PC-3 (cell line): ENCODE measurements at regions of chr20 and their contacts with region 1.

Region 1: GRCh38 chr20:33262658-33263065 is 20.4 kb upstream of the BPIFB1 start:
- DNase-seq: peak; percentile 74
- ATAC-seq: peak; percentile 97
- H3K4me3 ChIP-seq: no peak overlapping the region
- H3K27ac ChIP-seq: no peak overlapping the region
- H3K4me1 ChIP-seq: peaks cover 6% of the 10 kb centered on the region; the same call in 1 of the 2 replicates
- H3K27me3 ChIP-seq: peaks cover 47% of the 10 kb centered on the region
- CTCF ChIP-seq: peak; percentile 88

Region 2: GRCh38 chr20:33299111-33299603 is 36.5 kb after region 1 on chr20:
- CTCF ChIA-PET with region 1: interaction called, 3 read pairs
- POLR2A ChIA-PET with region 1: no interaction called
- intact Hi-C with region 1: loop called (anchors 1 kb)
- DNase-seq: peak; percentile 81
- ATAC-seq: peak; percentile 93
- H3K4me3 ChIP-seq: peak overlapping the region; percentile 43; the same call in 1 of the 2 replicates
- H3K27ac ChIP-seq: no peak overlapping the region
- H3K4me1 ChIP-seq: no peaks in the 10 kb centered on the region
- H3K27me3 ChIP-seq: peaks cover 18% of the 10 kb centered on the region
- CTCF ChIP-seq: peak; percentile 93

Region 3: DNA sequence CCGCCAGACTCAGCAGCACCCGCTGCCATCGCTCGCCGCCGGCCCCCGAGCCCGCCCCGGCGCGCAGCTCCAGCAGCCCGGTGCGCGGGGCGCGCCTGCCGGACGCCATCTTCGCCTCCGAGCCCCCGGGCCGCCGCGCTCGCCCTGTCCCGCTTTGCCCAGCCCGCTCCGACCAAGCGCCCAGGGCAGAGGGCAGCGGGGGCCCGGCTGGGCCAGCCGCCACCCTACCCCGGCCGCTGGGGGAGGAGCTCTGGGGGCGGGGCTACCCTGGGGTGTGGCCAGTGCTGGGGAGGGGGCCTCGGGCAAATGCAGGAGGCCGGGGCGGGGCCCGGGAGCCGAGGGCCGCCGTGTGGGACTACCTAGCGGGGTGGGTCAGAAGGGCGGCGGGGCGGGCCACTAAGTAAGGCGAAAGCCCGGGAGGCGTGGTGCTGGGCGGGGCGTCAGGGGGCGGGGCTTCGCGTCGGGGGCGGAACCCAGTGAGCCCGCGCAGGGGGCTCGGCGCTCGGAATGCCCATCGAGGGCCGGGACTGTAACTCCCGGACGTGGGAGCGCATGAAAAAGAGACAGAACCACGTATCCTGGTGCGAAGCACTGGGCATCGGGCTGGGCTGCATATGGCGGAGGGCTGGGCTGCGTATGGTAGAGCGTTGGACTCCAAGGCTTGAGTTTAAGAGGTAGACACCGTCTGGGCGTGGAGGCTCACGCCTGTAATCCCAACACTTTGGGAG is 181.0 kb after region 1 on chr20 and contains the start of gene SNTA1:
- CTCF ChIA-PET with region 1: interaction called, 12 read pairs
- POLR2A ChIA-PET with region 1: no interaction called
- intact Hi-C with region 1: loop called (anchors 10 kb)
- DNase-seq: peak; percentile 83
- ATAC-seq: peak; percentile 89
- H3K4me3 ChIP-seq: peak within 1 kb of the TSS; percentile 84
- H3K27ac ChIP-seq: no peak within 1 kb of the TSS
- H3K4me1 ChIP-seq: peaks cover 5% of the 10 kb centered on the region; the same call in 1 of the 2 replicates
- H3K27me3 ChIP-seq: no peaks in the 10 kb centered on the region
- CTCF ChIP-seq: no peak
- total RNA-seq, gene SNTA1: 25.9 and 29.4 TPM in 2 replicates